ENCODE measurements at regions of chr21 and their contacts with region 1.

Region 1: DNA sequence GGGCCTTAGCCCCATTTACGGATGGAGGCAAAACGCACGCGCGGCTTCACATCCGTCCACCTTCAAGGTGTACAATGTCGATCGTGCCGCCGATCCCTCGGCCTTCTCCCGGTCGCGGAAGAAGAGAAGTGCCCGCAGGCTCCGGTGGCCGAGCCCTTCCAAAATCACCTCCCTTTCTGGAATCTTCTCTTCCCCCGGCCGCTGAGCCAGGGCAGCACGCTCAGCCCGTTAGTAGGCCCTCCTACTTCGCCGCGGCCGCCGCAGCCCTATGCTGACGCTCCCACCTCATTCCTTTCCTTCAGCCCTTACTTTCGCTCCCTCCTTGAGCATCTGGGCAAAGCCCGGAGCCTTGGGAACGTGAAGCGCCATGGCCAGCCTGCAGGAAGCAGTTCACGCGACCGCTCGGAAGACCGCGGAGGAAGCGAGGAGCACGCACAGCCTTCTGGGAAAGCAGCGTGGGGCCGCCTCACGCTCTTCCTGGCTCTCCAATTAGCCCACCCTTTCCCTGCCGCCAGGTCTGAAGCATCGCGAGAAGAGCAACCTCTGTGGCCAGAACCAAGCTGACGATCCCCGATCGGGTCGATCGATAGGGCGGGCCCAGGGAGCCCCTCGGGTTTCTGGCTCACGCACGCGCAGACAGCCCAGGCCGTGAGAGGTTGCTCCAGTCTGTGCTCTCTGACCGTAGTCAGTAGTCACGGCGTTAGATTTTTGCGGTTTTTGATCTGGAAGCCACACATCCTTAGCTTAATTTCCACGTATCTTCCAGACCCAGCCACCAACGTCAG is at the start of gene CCT8:
- DNase-seq: peak; percentile 99
- H3K4me3 Mint-ChIP-seq: peak within 1 kb of the TSS; percentile 100
- H3K27ac Mint-ChIP-seq: peak within 1 kb of the TSS; percentile 100
- H3K4me1 Mint-ChIP-seq: peaks cover 22% of the 10 kb centered on the region
- H3K27me3 Mint-ChIP-seq: no peaks in the 10 kb centered on the region
- CTCF ChIP-seq: no peak
- total RNA-seq, gene CCT8: 174 and 221 TPM in 2 replicates

Region 2: DNA sequence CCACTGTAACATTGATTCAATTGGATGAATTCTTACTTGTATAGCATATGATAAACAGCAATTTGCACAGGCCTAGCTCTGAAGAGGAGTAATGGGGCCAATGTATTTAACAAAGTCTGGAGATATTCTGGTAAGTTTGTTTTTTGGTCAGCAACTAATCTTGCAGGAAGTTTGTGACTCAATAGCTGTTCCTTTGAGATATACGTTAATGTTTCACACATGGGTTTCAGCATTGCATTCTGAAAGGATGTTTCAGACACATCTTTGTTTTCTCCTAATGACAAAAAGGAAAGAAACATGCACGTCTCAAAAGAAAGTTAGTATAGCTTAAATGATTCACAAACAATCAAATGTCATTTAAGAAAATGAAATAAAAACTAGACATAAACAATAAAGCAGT is 129.8 kb before region 1 on chr21:
- CTCF ChIA-PET with region 1: no interaction called
- POLR2A ChIA-PET with region 1: no interaction called
- intact Hi-C with region 1: no loop called
- DNase-seq: no peak
- H3K4me3 Mint-ChIP-seq: no peak overlapping the region
- H3K27ac Mint-ChIP-seq: no peak overlapping the region
- H3K4me1 Mint-ChIP-seq: peaks cover 10% of the 10 kb centered on the region
- H3K27me3 Mint-ChIP-seq: no peaks in the 10 kb centered on the region
- CTCF ChIP-seq: no peak

Region 3: DNA sequence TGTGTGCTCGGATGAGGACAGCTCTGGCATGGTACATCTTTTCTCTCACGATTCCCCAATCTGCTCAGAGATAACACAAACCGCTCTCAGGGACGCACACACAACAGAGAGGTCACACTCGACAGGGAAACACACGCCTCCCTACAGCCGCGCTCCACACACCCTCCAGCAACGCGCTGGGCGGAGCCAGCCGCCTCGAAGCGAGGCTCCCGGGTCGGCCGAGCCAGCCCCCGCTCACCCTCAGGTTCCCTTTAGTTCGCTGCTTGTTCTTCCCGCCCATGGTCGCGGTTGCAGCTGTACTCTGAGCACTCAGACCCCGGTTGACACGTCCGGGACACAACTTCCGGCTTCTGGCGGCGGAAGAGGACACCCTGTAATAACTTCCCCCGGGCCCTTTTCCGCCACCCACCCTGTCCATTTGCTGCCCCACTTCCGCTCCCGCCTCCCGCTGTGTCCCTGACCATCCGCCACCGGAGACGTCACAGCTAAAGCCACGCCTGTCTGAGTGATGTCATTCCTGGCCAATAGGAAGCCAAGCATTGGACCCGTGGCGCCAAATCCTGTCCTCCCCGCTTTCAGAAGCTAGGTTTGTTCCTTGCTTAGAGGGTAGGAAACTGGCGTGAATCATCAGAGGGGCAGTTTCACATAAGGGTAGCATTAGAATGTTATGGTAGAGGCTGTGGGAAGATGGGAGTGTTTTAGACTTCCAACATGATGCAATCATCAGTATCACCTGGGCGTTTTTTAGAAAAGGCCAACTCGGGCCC is 80.7 kb before region 1 on chr21 and contains the start of gene LTN1:
- CTCF ChIA-PET with region 1: no interaction called
- POLR2A ChIA-PET with region 1: interaction called, 24 read pairs
- intact Hi-C with region 1: no loop called
- DNase-seq: peak; percentile 99
- H3K4me3 Mint-ChIP-seq: peak within 1 kb of the TSS; percentile 95
- H3K27ac Mint-ChIP-seq: peak within 1 kb of the TSS; percentile 99
- H3K4me1 Mint-ChIP-seq: peaks cover 22% of the 10 kb centered on the region
- H3K27me3 Mint-ChIP-seq: no peaks in the 10 kb centered on the region
- CTCF ChIP-seq: no peak
- total RNA-seq, gene LTN1: 27.1 and 34.3 TPM in 2 replicates

Region 4: DNA sequence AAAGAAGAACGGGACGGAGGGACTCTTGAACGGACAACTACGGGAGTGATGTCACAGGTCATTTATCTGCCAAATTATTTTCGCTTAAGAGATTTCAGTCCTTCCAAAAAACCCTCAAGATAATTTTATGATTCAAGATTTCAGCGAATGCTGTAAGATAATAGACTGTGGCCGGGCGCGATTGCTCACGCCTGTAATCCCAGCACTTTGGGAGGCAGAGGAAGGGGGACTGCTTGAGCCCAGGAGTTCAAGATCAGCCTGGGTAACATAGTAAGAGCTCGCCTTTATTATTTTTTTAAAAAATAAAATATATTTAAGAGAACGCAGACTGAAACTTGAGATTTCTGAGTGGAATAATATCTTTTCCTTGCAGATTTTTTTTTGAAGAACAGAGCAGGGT is 54.9 kb before region 1 on chr21:
- CTCF ChIA-PET with region 1: interaction called, 5 read pairs
- POLR2A ChIA-PET with region 1: interaction called, 126 read pairs
- intact Hi-C with region 1: no loop called
- DNase-seq: no peak
- H3K4me3 Mint-ChIP-seq: peak overlapping the region; percentile 75
- H3K27ac Mint-ChIP-seq: peak overlapping the region; percentile 81
- H3K4me1 Mint-ChIP-seq: peaks cover 11% of the 10 kb centered on the region
- H3K27me3 Mint-ChIP-seq: no peaks in the 10 kb centered on the region
- CTCF ChIP-seq: no peak

Region 5: GRCh38 chr21:29056005-29056404 is 17.4 kb before region 1 on chr21:
- CTCF ChIA-PET with region 1: interaction called, 3 read pairs
- POLR2A ChIA-PET with region 1: interaction called, 69 read pairs
- intact Hi-C with region 1: no loop called
- DNase-seq: no peak
- H3K4me3 Mint-ChIP-seq: no peak overlapping the region
- H3K27ac Mint-ChIP-seq: no peak overlapping the region
- H3K4me1 Mint-ChIP-seq: no peaks in the 10 kb centered on the region
- H3K27me3 Mint-ChIP-seq: no peaks in the 10 kb centered on the region
- CTCF ChIP-seq: no peak

Region 6: DNA sequence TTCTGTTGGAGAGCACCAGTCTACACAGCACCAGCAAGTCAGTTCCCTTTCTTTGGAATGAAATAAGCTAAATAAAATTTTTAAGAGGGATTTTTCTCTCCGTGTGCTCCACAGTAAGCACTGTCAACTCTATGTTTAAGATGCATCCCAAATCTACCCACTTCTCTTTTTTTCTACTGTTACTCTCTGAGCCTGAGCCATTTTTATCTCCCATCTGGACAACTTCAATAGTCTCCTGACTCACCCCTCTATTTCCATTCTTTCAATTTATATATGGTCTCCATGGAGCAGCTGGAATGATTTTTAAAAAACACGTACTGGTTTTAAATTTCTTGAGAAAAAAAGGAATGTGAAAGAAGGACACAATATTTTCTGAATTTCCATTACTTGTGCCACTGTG is 24.7 kb after region 1 on chr21:
- CTCF ChIA-PET with region 1: interaction called, 3 read pairs
- POLR2A ChIA-PET with region 1: interaction called, 95 read pairs
- intact Hi-C with region 1: no loop called
- DNase-seq: no peak
- H3K4me3 Mint-ChIP-seq: no peak overlapping the region
- H3K27ac Mint-ChIP-seq: no peak overlapping the region
- H3K4me1 Mint-ChIP-seq: peaks cover 6% of the 10 kb centered on the region
- H3K27me3 Mint-ChIP-seq: no peaks in the 10 kb centered on the region
- CTCF ChIP-seq: no peak

Region 7: DNA sequence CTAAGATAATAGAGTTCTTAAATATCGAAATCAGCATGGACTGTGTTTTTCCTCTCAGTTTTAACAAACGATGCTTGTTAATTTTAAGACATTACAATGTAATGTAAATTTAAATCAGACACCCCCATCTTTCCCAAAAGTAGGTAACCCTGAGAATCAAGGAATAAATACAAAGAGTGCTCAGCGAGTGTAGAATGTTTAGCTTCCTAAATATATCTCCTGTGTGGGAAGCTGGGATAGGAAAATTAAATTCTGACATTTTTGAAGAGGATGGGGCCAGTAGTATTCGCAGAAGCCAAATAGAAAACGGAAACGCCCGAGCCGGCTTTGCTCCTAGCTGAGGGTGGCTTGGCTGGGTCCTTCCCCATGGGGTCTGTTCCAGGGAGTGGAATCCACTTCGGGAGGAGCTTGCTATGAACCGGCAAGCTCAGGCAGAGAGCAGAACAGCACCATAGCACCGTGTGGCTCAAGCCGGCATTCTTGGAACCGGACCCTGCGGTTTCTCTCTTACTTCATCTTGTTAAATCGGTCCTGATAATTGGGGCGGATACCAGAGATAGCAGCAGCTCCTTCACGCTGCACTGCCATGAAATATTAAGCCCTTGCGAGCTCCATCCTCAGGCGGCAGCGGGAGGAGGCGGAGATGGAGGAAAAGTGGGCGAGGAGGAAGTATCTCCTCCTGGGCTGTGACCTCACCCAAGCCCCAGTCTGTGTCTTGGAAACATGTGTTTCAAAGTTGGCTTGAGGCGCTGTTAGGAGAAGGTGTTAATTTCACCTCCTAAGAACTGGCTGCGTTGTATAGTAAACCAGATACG is 81.9 kb after region 1 on chr21:
- CTCF ChIA-PET with region 1: interaction called, 4 read pairs
- POLR2A ChIA-PET with region 1: interaction called, 73 read pairs
- intact Hi-C with region 1: no loop called
- DNase-seq: peak; percentile 52
- H3K4me3 Mint-ChIP-seq: peak overlapping the region; percentile 58
- H3K27ac Mint-ChIP-seq: peak overlapping the region; percentile 39
- H3K4me1 Mint-ChIP-seq: peaks cover 25% of the 10 kb centered on the region
- H3K27me3 Mint-ChIP-seq: no peaks in the 10 kb centered on the region
- CTCF ChIP-seq: no peak

Region 8: GRCh38 chr21:29342363-29342957 is 269.0 kb after region 1 on chr21:
- CTCF ChIA-PET with region 1: no interaction called
- POLR2A ChIA-PET with region 1: interaction called, 6 read pairs
- intact Hi-C with region 1: loop called (anchors 5 kb)
- DNase-seq: peak; percentile 94
- H3K4me3 Mint-ChIP-seq: peak overlapping the region; percentile 60
- H3K27ac Mint-ChIP-seq: peak overlapping the region; percentile 84
- H3K4me1 Mint-ChIP-seq: peaks cover 34% of the 10 kb centered on the region
- H3K27me3 Mint-ChIP-seq: no peaks in the 10 kb centered on the region
- CTCF ChIP-seq: no peak